ENCODE measurements at regions of chr7 and their contacts with region 1.

Region 1: GRCh38 chr7:142853739-142854371 is 1.0 kb upstream of the EPHB6 start:
- DNase-seq: peak; percentile 47 to 77 (median 59)
- H3K4me3 ChIP-seq: peak overlapping the region; percentile 70
- H3K4me3 Mint-ChIP-seq: peak overlapping the region; percentile 90 to 98 (median 96)
- H3K27ac ChIP-seq: peak overlapping the region; percentile 56
- H3K27ac Mint-ChIP-seq: peak overlapping the region; percentile 48 to 90 (median 88)
- H3K4me1 ChIP-seq: peaks cover 21% of the 10 kb centered on the region
- H3K4me1 Mint-ChIP-seq: peaks cover 10 to 27% (median 15%) of the 10 kb centered on the region in 3 donors
- H3K27me3 ChIP-seq: no peaks in the 10 kb centered on the region
- H3K27me3 Mint-ChIP-seq: peaks cover 3 to 12% of the 10 kb centered on the region in 2 donors

Region 2: DNA sequence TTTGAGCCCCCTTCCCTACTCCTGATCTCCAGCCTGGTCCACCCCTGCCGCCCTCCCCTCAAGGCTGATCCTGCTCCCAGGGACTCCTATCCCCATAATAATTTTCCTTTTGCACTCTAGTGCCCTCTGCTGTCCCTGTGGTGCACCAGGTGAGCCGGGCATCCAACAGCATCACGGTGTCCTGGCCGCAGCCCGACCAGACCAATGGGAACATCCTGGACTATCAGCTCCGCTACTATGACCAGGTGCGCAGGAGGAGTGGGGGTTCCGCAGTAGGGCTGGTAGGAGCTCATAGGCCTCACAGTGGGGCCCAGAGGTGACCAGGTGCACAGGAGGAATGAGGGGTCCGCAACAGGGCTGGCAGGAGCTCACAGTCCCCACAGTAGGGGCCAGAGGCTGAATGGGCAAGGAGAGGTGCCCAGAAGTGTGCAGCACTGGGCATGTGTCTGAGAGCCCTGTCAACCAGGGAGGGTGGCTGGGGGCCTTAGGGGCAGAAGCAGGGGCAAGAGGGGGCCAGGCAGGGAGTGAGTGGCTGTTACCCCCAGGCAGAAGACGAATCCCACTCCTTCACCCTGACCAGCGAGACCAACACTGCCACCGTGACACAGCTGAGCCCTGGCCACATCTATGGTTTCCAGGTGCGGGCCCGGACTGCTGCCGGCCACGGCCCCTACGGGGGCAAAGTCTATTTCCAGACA is 12.7 kb after region 1 on chr7:
- CTCF ChIA-PET with region 1: interaction called, 28 read pairs
- POLR2A ChIA-PET with region 1: no interaction called
- DNase-seq: no peak
- H3K4me3 ChIP-seq: no peak overlapping the region
- H3K4me3 Mint-ChIP-seq: no peak overlapping the region
- H3K27ac ChIP-seq: no peak overlapping the region
- H3K27ac Mint-ChIP-seq: no peak overlapping the region
- H3K4me1 ChIP-seq: no peaks in the 10 kb centered on the region
- H3K4me1 Mint-ChIP-seq: peaks cover 0 to 3% (median 0%) of the 10 kb centered on the region in 3 donors
- H3K27me3 ChIP-seq: no peaks in the 10 kb centered on the region
- H3K27me3 Mint-ChIP-seq: no peaks in the 10 kb centered on the region

Region 3: DNA sequence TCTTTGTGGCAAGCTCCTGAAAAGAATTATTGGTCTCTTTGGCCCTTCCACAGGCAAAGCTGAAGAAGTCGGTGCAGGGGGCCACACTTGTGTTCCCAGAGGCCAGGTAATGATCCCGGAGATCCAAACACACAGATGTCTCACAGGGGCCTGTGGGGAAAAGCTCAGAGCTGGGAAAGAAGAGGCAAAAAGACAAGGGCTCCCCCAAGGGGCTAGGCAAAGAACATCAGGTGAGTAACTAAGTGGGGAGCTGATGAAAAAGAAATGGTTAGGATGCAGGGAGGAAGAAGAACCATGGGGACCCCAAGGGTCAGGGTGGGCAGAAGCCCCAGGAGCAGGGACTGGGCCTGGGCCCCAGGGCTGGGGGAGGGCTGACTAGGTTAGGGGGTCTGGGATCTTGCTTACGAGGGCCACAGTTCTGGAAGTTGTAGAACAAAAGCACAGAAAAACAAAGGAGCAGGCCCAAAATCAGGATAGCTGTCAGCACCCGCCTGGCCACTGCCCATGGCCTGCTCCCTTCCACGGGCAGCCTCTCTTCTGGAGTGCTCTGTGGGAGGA is 107.2 kb after region 1 on chr7:
- CTCF ChIA-PET with region 1: no interaction called
- POLR2A ChIA-PET with region 1: no interaction called
- DNase-seq: no peak
- H3K4me3 ChIP-seq: no peak overlapping the region
- H3K4me3 Mint-ChIP-seq: no peak overlapping the region
- H3K27ac ChIP-seq: peak overlapping the region; percentile 83
- H3K27ac Mint-ChIP-seq: no peak overlapping the region
- H3K4me1 ChIP-seq: no peaks in the 10 kb centered on the region
- H3K4me1 Mint-ChIP-seq: no peaks in the 10 kb centered on the region
- H3K27me3 ChIP-seq: no peaks in the 10 kb centered on the region
- H3K27me3 Mint-ChIP-seq: peaks cover 12 to 60% of the 10 kb centered on the region in 2 donors

Region 4: DNA sequence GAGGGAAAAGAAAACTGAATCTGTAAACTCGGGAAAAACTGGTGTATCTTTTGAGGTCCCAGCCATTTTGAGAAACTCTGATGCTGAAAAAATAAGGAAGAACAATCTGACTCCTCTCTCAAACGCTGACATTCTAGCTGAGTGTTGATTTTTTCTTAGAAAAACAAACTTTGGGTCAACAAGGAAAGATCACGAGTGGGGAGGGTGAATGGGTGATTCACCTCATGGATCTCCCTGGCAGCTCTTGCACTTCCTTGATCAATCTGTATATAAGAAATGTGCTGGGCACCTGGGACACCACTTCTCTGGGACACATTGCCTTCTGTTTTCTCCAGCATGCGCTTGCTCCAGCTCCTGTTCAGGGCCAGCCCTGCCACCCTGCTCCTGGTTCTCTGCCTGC is 277.9 kb after region 1 on chr7 and contains the start of gene PIP:
- CTCF ChIA-PET with region 1: no interaction called
- POLR2A ChIA-PET with region 1: no interaction called
- DNase-seq: no peak
- H3K4me3 ChIP-seq: no peak within 1 kb of the TSS
- H3K4me3 Mint-ChIP-seq: no peak within 1 kb of the TSS
- H3K27ac ChIP-seq: no peak within 1 kb of the TSS
- H3K27ac Mint-ChIP-seq: no peak within 1 kb of the TSS
- H3K4me1 ChIP-seq: no peaks in the 10 kb centered on the region
- H3K4me1 Mint-ChIP-seq: no peaks in the 10 kb centered on the region
- H3K27me3 ChIP-seq: no peaks in the 10 kb centered on the region
- H3K27me3 Mint-ChIP-seq: peaks cover 3 to 63% of the 10 kb centered on the region in 2 donors
- total RNA-seq, gene PIP: not detected